PC-9 (cell line): ENCODE measurements at regions of chr10 and their contacts with region 1.

Region 1: DNA sequence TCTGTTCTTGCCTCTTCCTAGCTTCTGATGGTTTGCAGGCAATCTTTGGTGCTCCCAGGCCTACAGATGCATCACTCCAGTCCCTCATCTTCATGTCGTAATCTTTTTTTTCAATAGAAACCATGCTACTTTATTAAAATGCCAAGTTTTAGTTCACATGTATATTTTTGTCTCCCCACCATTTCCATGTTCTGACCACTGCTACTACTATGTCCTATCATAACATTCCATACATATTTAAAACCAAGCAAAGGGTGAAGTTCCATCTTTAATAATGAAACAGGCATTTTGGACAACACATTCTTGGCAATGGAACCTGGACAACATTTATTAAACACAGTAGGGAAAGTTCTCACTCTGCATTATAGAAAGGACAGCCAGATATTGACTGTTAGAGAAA is 58.8 kb downstream of the ZNF518A start:
- DNase-seq: no peak
- H3K4me3 ChIP-seq: no peak overlapping the region
- H3K27ac ChIP-seq: no peak overlapping the region
- H3K4me1 ChIP-seq: no peaks in the 10 kb centered on the region
- H3K27me3 ChIP-seq: peaks cover 2% of the 10 kb centered on the region; the same call in 1 of the 2 replicates
- CTCF ChIP-seq: no peak

Region 2: DNA sequence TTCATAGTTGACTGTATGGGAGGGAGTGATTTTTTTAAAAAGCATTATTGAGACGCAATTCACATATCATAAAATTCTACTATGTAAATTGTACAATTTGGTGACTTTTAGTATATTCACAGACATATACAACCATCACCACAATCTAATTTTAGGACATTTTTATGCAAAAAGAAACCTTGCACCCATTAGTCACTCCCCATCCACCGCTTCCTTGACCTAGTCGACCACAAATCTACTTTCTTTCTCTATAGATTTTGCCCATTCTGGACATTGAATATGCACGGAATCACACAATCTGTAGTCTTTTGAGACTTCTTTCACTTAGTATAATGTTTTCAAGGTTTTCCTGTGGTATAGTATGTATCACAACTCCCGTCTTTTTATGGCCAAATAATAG is 27.9 kb after region 1 on chr10:
- CTCF ChIA-PET with region 1: no interaction called
- POLR2A ChIA-PET with region 1: no interaction called
- intact Hi-C with region 1: loop called (anchors 2 kb)
- DNase-seq: no peak
- H3K4me3 ChIP-seq: no peak overlapping the region
- H3K27ac ChIP-seq: no peak overlapping the region
- H3K4me1 ChIP-seq: no peaks in the 10 kb centered on the region
- H3K27me3 ChIP-seq: no peaks in the 10 kb centered on the region
- CTCF ChIP-seq: no peak

Region 3: DNA sequence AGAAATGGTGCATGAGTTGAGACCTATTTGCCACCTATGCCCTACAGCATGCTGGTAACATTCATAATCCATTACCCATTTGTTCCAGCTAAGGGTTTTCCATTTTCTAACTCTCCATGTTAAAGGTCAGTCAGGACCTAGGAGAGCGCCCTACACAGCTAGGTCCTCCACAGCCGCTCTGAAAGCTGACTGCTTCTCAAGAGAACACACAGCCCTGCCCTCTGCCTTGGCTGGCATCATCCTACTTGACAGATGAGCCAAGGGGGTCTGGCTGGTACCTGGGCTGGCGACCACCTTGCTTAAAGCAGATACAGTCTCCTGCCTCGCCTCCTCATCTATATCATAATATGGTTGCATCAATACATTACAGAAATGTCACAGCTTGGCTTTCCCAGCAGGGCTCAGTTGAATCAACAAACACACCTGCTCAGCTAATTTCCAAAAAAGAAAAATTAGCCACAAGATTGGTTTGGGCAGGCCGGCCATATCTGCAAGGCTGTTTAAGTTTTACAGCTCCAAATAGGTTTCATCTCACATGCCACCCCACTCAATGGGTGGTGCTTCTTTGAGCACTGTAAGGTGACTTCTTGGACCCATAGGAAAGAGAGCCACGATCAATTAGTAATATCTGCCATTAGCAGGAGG is 307.5 kb after region 1 on chr10:
- CTCF ChIA-PET with region 1: no interaction called
- POLR2A ChIA-PET with region 1: no interaction called
- intact Hi-C with region 1: no loop called
- DNase-seq: no peak
- H3K4me3 ChIP-seq: no peak overlapping the region
- H3K27ac ChIP-seq: no peak overlapping the region
- H3K4me1 ChIP-seq: no peaks in the 10 kb centered on the region
- H3K27me3 ChIP-seq: no peaks in the 10 kb centered on the region
- CTCF ChIP-seq: no peak